Dorsolateral prefrontal cortex (tissue), 120 donors: ENCODE measurements at regions of chr2 and their contacts with region 1.

Region 1: DNA sequence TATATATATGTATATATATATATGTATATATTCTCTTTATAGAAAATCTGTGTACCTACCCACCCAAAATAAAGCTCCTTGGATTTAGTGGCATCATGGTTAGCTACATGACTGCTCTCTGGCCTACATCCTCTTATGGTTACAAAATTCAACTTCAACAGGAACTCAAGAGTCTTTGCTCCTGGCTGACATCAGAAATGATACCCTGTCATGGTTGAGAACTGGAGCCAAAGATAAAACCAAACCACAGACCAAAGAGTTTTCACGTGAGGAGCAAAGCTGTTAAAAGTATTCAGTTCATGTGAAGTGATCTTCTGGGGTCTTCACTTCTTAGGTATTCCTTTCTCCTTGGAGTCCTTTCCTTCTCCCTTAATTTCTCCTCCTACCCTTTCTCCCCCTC is 476.3 kb downstream of the SOX11 start:
- DNase-seq: no peak
- H3K4me3 ChIP-seq: no peak overlapping the region
- H3K27ac ChIP-seq: no peak overlapping the region
- H3K27me3 ChIP-seq: peaks cover 0 to 8% (median 0%) of the 10 kb centered on the region in 45 donors
- CTCF ChIP-seq: no peak

Region 2: DNA sequence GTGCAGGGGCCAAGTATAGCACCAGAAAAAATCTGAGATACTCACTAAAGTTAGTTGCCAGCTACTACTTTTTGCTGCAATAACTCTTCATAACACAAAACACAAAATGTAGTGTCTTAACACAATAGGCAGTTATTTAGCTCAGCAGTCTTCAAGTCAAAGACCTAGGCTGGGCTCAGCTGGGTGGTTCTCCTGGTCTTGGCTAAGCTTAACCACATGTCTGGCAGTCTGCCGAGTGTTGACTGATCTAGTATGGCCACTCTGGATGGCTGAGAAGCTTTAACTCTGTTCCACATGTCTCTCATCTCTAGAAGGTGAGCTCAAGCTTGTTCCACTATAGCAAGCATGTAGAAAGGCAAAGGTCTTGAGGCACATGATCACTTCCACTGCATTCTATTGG is 24.7 kb before region 1 on chr2:
- intact Hi-C with region 1: loop called in 1 of 2 experiments (anchors 2 kb)
- DNase-seq: no peak
- H3K4me3 ChIP-seq: no peak overlapping the region
- H3K27ac ChIP-seq: no peak overlapping the region
- H3K27me3 ChIP-seq: peaks cover 0 to 2% (median 0%) of the 10 kb centered on the region in 45 donors
- CTCF ChIP-seq: no peak